Brain microvascular endothelial cell (primary cell): ENCODE measurements at regions of chr13 and their contacts with region 1.

Region 1: GRCh38 chr13:109361562-109362289 is 424.7 kb downstream of the IRS2 start:
- DNase-seq: no peak
- H3K4me3 ChIP-seq: no peak overlapping the region
- H3K27ac ChIP-seq: no peak overlapping the region
- H3K27me3 ChIP-seq: no peaks in the 10 kb centered on the region
- CTCF ChIP-seq: no peak

Region 2: GRCh38 chr13:109100705-109101304 is 260.9 kb before region 1 on chr13:
- in situ Hi-C with region 1: no loop called
- DNase-seq: no peak
- H3K4me3 ChIP-seq: no peak overlapping the region
- H3K27ac ChIP-seq: no peak overlapping the region
- H3K27me3 ChIP-seq: no peaks in the 10 kb centered on the region
- CTCF ChIP-seq: no peak

Region 3: GRCh38 chr13:109131698-109132257 is 229.9 kb before region 1 on chr13:
- in situ Hi-C with region 1: no loop called
- DNase-seq: peak; percentile 33
- H3K4me3 ChIP-seq: no peak overlapping the region
- H3K27ac ChIP-seq: no peak overlapping the region
- H3K27me3 ChIP-seq: no peaks in the 10 kb centered on the region
- CTCF ChIP-seq: no peak

Region 4: GRCh38 chr13:109162248-109163053 is 199.3 kb before region 1 on chr13:
- in situ Hi-C with region 1: loop called (anchors 25 kb)
- DNase-seq: no peak
- H3K4me3 ChIP-seq: no peak overlapping the region
- H3K27ac ChIP-seq: no peak overlapping the region
- H3K27me3 ChIP-seq: no peaks in the 10 kb centered on the region
- CTCF ChIP-seq: no peak